ENCODE measurements at regions of chr2 and their contacts with region 1.

Region 1: DNA sequence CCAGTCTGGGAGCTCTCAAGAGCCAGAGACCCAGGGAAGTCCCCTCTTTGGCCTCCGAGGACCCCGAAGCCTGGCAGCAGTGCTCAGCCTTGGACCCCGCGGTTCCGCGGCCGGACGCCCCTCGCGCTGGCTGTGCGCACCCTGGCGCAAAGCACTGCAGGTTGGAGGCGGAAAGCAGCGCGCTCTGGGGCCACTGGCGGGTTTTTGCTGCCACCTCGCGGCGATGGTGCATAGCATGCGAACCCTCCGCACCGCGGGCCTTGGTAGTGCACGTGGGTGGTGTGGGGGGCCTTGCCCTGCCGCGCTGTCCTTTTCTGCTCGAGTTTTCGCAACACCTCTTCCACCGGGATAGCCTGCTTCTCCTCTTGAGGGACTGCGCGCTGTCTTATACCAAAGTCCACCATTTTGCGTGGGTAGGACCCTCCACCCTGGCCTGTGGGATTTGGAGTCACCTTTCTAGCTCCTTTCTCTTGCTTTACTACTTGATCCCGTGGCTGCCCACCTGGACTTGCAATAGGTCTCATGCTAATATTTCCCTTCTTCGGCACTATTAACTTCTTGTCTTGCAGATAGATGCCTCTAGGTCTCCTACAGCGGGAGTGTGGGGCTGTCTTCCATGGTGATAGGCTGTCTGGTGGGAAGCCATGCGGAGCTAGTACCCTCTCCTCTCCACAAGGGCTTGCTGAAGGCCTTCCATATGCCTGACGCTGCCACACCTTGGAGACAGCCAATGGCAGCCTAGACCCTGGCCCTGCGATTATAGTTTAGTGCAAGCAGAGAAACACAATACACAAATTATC is 14.3 kb downstream of the SIX3 start:
- DNase-seq: peak; percentile 60 to 94 (median 78)
- ATAC-seq: peak; percentile 73 to 90 (median 88)
- H3K4me3 ChIP-seq: peak overlapping the region in 2 of 4 donors; percentile 20 to 42
- H3K27ac ChIP-seq: no peak overlapping the region
- H3K4me1 ChIP-seq: peaks cover 0 to 18% (median 6%) of the 10 kb centered on the region in 3 donors
- H3K27me3 ChIP-seq: peaks cover 0 to 18% (median 5%) of the 10 kb centered on the region in 4 donors
- CTCF ChIP-seq: peak; percentile 66 to 84 (median 77)

Region 2: GRCh38 chr2:44051593-44052347 is 904.0 kb before region 1 on chr2:
- intact Hi-C with region 1: loop called in 1 of 3 experiments (anchors 10 kb)
- DNase-seq: no peak
- ATAC-seq: no peak
- H3K4me3 ChIP-seq: no peak overlapping the region
- H3K27ac ChIP-seq: no peak overlapping the region
- H3K4me1 ChIP-seq: no peaks in the 10 kb centered on the region
- H3K27me3 ChIP-seq: no peaks in the 10 kb centered on the region
- CTCF ChIP-seq: no peak

Region 3: DNA sequence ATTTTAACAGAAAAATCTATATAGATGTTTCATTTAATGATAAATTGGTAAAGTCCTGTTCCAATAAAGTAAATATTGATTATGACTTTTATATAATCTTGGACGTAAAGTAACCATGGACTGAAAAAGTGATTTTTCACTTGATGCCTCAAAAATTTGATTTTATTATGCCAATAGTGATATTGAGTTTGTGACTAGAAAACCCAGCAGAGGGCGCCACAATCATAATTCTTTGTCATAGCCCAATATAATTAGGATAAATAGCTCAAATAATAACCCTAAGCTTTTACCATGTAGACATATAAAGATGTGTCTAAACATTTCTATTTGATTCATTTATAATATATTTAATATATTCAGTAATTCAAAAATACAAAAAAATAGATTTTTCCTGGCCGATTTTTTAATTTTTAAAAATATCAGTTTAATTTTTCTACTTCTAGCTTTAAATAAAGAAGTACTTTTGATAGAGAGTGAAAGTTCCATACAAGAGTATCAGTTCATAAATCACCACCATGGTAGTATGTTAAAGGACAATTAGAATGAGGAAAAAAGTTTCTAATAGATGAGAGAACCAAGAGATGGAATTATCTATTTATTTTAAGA is 563.4 kb before region 1 on chr2:
- intact Hi-C with region 1: loop called in 1 of 3 experiments (anchors 5 kb)
- DNase-seq: peak in 3 of 6 donors; percentile 29 to 64 (median 38)
- ATAC-seq: no peak
- H3K4me3 ChIP-seq: no peak overlapping the region
- H3K27ac ChIP-seq: no peak overlapping the region
- H3K4me1 ChIP-seq: no peaks in the 10 kb centered on the region
- H3K27me3 ChIP-seq: no peaks in the 10 kb centered on the region
- CTCF ChIP-seq: peak in 2 of 4 donors; percentile 47 to 49

Region 4: DNA sequence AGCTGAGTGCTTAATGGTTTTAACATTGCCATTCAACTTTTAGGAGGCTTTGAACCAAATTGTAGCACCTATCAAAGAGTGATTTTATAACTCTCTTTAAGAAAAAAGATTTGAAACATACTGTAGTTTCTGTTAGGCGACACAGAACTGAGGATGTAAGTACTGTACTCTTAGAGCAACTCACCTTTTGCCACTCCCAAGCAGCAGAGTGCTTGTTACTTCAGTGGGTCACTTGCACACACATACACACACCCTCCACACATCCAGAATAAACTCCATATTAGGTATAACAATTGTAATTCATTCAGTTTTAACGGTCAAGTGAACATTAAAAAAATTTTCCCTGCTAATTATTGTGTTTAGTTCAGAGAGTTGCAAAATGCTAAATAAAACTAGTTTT is 475.7 kb before region 1 on chr2:
- intact Hi-C with region 1: loop called in 2 of 3 experiments (anchors 5 to 10 kb)
- DNase-seq: no peak
- ATAC-seq: no peak
- H3K4me3 ChIP-seq: no peak overlapping the region
- H3K27ac ChIP-seq: no peak overlapping the region
- H3K4me1 ChIP-seq: no peaks in the 10 kb centered on the region
- H3K27me3 ChIP-seq: no peaks in the 10 kb centered on the region
- CTCF ChIP-seq: no peak